Prostate gland (tissue), 2 donors: ENCODE measurements at regions of chr17 and their contacts with region 1.

Region 1: GRCh38 chr17:39980351-39981206 is at the start of gene PSMD3:
- DNase-seq: peak; percentile 100
- H3K4me3 ChIP-seq: peak within 1 kb of the TSS; percentile 85 to 88
- H3K27ac ChIP-seq: peak within 1 kb of the TSS; percentile 82 to 86
- H3K4me1 ChIP-seq: no peaks in the 10 kb centered on the region
- H3K27me3 ChIP-seq: no peaks in the 10 kb centered on the region
- CTCF ChIP-seq: peak; percentile 33 to 99 (median 92)
- POLR2A ChIP-seq: peak; percentile 87
- total RNA-seq, gene PSMD3: 96.4 to 116 TPM

Region 2: GRCh38 chr17:39927101-39927928 is 53.3 kb before region 1 on chr17 and contains the starts of genes LRRC3C and ORMDL3:
- intact Hi-C with region 1: loop called (anchors 2 kb)
- DNase-seq: peak; percentile 92
- H3K4me3 ChIP-seq: peak within 1 kb of the TSS; percentile 87 to 90
- H3K27ac ChIP-seq: peak within 1 kb of the TSS; percentile 79 to 90
- H3K4me1 ChIP-seq: peaks cover 3% of the 10 kb centered on the region
- H3K27me3 ChIP-seq: no peaks in the 10 kb centered on the region
- CTCF ChIP-seq: peak in 1 of 4 experiments; percentile 17
- POLR2A ChIP-seq: peak; percentile 75
- total RNA-seq, gene LRRC3C: not detected
- total RNA-seq, gene ORMDL3: 82.4 to 91.6 TPM

Region 3: DNA sequence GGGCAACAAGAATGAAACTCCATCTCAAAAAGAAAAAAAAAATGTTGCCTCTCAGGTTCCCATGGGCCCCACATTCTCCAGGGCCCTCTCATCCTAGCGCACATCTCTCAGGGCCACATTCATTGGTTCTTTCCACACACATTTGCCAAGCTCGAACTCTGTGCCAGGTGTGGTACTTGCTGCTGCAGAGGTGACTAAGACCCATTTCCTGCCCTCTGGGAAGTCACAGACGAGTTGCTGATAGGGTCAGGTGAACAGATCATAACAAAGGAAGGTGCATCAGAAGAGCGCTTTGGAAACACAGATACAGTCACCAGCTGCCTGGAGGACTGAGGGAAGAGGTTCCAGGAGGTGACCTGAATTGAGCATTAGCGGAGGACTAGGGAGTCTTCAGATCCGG is 16.8 kb before region 1 on chr17:
- intact Hi-C with region 1: loop called (anchors 1 kb)
- DNase-seq: no peak
- H3K4me3 ChIP-seq: no peak overlapping the region
- H3K27ac ChIP-seq: no peak overlapping the region
- H3K4me1 ChIP-seq: no peaks in the 10 kb centered on the region
- H3K27me3 ChIP-seq: no peaks in the 10 kb centered on the region
- CTCF ChIP-seq: no peak
- POLR2A ChIP-seq: no peak